HEK293 (cell line): ENCODE measurements at regions of chrX and their contacts with region 1.

Region 1: DNA sequence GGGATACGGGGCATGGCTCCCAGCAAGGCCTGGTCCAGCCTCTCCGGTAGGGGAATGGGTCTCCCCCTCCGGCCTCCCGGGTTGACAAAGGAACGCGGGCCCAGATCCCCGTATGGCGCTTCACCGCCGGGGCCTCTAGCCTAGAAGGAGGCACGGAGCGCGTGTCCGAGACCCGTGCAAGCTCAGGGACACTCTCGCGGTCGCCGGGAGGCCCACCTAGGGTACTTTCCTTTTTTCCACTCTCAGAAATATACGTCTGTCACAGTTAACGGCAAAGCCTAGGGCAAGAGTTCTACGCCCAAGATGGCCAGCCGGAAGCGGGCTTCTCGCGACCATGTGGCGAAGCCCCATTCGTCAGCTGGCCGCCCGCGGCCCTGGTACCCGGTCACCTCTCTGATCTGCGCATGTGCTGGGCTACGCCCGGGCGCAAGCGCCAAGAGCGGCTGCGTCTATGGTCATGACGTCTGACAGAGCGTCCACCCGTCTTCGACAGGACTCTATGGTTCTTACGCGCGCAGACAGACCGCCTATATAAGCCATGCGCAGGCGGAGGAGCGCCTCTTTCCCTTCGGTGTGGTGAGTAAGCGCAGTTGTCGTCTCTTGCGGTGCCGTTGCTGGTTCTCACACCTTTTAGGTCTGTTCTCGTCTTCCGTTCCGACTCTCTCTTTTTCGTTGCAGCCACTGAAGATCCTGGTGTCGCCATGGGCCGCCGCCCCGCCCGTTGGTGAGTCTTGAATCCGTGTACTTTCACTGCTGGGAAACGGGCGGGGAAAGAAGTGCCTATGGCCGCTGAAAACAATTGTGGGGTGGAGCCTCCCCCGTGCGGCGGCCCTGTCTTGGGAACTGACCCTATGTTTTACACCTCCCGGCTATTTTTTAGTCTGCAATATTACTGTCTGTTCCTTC is at the start of gene RPL10:
- H3K4me3 ChIP-seq: peak within 1 kb of the TSS; percentile 66
- H3K27ac ChIP-seq: peak within 1 kb of the TSS; percentile 84
- H3K4me1 ChIP-seq: no peaks in the 10 kb centered on the region
- CTCF ChIP-seq: no peak

Region 2: DNA sequence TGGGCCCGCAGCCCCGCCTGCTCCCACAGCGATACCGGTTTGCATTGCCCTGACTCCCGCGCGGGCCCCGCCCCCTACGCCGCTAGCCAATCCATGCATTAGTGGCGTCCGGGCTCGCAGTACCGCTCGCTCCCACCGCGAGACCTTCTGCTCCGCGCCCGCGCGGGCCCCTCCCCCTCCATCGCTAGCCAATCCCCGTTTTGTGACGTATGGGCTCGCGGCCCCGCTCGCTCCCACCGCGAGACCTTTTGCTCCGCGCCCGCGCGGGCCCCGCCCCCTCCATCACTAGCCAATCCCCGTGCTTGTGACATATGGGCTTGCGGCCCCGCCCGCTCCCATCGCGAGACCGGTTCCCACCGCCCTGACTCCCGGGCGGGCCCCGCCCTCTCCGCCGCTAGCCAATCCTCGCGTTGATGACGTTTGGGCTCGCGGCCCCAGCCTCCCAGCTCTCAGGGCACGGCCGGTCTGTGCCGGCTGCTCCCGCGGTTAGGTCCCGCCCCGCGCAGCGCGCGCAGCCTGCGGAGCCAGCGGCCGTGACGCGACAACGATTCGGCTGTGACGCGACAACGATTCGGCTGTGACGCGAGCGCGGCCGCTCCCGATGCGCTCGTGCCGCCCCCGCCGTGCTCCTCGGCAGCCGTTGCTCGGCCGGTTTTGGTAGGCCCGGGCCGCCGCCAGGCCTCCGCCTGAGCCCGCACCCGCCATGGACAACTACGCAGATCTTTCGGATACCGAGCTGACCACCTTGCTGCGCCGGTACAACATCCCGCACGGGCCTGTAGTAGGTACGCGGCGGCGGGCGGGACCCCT is 19.1 kb before region 1 on chrX and contains the start of gene EMD:
- CTCF ChIA-PET with region 1: interaction called, 6 read pairs
- POLR2A ChIA-PET with region 1: interaction called, 17 read pairs
- H3K4me3 ChIP-seq: peak within 1 kb of the TSS; percentile 73
- H3K27ac ChIP-seq: peak within 1 kb of the TSS; percentile 94
- H3K4me1 ChIP-seq: peaks cover 7% of the 10 kb centered on the region
- CTCF ChIP-seq: no peak

Region 3: GRCh38 chrX:154411322-154411980 is 13.4 kb after region 1 on chrX and contains the start of gene TAFAZZIN:
- CTCF ChIA-PET with region 1: interaction called, 5 read pairs
- POLR2A ChIA-PET with region 1: interaction called, 57 read pairs
- H3K4me3 ChIP-seq: peak within 1 kb of the TSS; percentile 57
- H3K27ac ChIP-seq: peak within 1 kb of the TSS; percentile 92
- H3K4me1 ChIP-seq: no peaks in the 10 kb centered on the region; the same call in 1 of the 2 replicates
- CTCF ChIP-seq: no peak; the same call in 1 of the 2 replicates